CD4-positive, alpha-beta memory T cell (primary cell): ENCODE measurements at regions of chr7 and their contacts with region 1.

Region 1: GRCh38 chr7:142535123-142535779 is 214.0 kb upstream of the PRSS1 start:
- DNase-seq: peak; percentile 57 to 80 (median 64)
- H3K4me3 ChIP-seq: peak overlapping the region in 1 of 2 donors; percentile 38
- H3K4me3 Mint-ChIP-seq: peak overlapping the region; percentile 61 to 86 (median 76)
- H3K27ac ChIP-seq: peak overlapping the region; percentile 49
- H3K27ac Mint-ChIP-seq: peak overlapping the region; percentile 32 to 94 (median 87)
- H3K4me1 ChIP-seq: peaks cover 28% of the 10 kb centered on the region
- H3K4me1 Mint-ChIP-seq: peaks cover 17 to 40% (median 23%) of the 10 kb centered on the region in 4 donors
- H3K27me3 ChIP-seq: no peaks in the 10 kb centered on the region
- H3K27me3 Mint-ChIP-seq: peaks cover 0 to 2% of the 10 kb centered on the region in 2 donors

Region 2: DNA sequence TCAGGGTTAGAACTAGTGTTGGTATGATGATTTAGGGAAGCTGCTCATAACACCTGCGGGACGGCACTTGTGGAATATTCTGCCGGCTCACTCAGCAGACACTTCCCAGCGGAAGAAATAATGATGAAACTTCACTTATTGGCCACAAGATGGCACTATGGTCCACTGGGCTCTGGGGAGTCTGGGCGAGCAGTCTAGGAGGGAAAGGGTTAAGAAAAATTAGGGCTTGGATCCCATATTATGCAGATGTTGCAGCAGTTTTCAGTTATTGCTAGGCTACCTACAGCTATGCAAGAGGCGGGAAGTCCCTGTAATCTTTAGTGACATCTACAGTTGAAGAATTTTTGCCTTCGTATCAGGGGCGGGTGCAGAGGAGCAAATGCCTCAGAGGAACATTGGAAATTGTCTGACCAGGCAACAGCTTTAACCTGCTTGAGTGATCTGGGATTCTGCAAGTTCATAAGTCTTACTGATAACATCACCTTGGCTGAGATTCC is 38.7 kb before region 1 on chr7:
- CTCF ChIA-PET with region 1: interaction called, 14 read pairs
- POLR2A ChIA-PET with region 1: no interaction called
- intact Hi-C with region 1: loop called (anchors 1 kb)
- DNase-seq: peak; percentile 33 to 46 (median 36)
- H3K4me3 ChIP-seq: no peak overlapping the region
- H3K4me3 Mint-ChIP-seq: peak overlapping the region; percentile 40 to 75 (median 66)
- H3K27ac ChIP-seq: no peak overlapping the region
- H3K27ac Mint-ChIP-seq: peak overlapping the region; percentile 39 to 86 (median 74)
- H3K4me1 ChIP-seq: peaks cover 30% of the 10 kb centered on the region
- H3K4me1 Mint-ChIP-seq: peaks cover 24 to 51% (median 30%) of the 10 kb centered on the region in 4 donors
- H3K27me3 ChIP-seq: no peaks in the 10 kb centered on the region
- H3K27me3 Mint-ChIP-seq: no peaks in the 10 kb centered on the region

Region 3: DNA sequence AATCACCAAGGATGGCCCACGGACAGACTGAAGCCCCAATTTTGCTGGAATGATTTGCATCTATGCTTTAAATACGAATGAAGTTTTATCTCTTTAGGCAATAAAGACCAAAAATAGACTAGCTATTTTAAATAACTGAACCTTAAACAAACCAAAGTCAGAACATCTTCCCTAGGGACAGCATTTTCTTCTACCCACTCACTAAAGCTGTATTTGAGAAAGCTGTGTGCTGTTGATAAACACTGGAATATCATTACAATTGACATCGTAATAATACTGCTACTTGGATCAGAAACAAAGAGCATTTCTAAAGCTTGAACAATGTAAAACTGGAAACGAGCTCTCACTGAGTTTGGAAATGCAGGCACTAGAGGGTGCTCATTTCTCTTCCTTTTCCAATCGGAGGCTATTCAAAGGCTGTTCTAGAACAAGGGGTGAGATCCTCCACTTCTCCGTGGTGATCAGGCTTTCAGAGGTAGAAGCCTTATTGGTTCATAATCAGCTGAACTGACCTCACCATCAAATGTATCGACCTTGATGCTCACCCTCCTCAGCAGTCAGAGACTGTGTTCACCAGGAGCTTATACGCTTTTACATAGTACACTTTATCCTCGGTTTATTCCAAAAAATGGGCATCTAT is 11.3 kb before region 1 on chr7:
- CTCF ChIA-PET with region 1: interaction called, 20 read pairs
- POLR2A ChIA-PET with region 1: interaction called, 3 read pairs
- intact Hi-C with region 1: no loop called
- DNase-seq: no peak
- H3K4me3 ChIP-seq: no peak overlapping the region
- H3K4me3 Mint-ChIP-seq: no peak overlapping the region
- H3K27ac ChIP-seq: no peak overlapping the region
- H3K27ac Mint-ChIP-seq: peak overlapping the region in 1 of 7 donors; percentile 20
- H3K4me1 ChIP-seq: peaks cover 12% of the 10 kb centered on the region
- H3K4me1 Mint-ChIP-seq: peaks cover 5 to 16% (median 9%) of the 10 kb centered on the region in 4 donors
- H3K27me3 ChIP-seq: no peaks in the 10 kb centered on the region
- H3K27me3 Mint-ChIP-seq: no peaks in the 10 kb centered on the region

Region 4: GRCh38 chr7:142557971-142558582 is 22.8 kb after region 1 on chr7:
- CTCF ChIA-PET with region 1: interaction called, 22 read pairs
- POLR2A ChIA-PET with region 1: interaction called, 17 read pairs
- intact Hi-C with region 1: loop called (anchors 1 kb)
- DNase-seq: peak; percentile 31 to 47 (median 41)
- H3K4me3 ChIP-seq: no peak overlapping the region
- H3K4me3 Mint-ChIP-seq: peak overlapping the region in 7 of 8 donors; percentile 17 to 77 (median 66)
- H3K27ac ChIP-seq: no peak overlapping the region
- H3K27ac Mint-ChIP-seq: peak overlapping the region in 4 of 7 donors; percentile 3 to 72 (median 37)
- H3K4me1 ChIP-seq: no peaks in the 10 kb centered on the region
- H3K4me1 Mint-ChIP-seq: peaks cover 0 to 4% (median 2%) of the 10 kb centered on the region in 4 donors
- H3K27me3 ChIP-seq: no peaks in the 10 kb centered on the region
- H3K27me3 Mint-ChIP-seq: peaks cover 2 to 3% of the 10 kb centered on the region in 2 donors

Region 5: DNA sequence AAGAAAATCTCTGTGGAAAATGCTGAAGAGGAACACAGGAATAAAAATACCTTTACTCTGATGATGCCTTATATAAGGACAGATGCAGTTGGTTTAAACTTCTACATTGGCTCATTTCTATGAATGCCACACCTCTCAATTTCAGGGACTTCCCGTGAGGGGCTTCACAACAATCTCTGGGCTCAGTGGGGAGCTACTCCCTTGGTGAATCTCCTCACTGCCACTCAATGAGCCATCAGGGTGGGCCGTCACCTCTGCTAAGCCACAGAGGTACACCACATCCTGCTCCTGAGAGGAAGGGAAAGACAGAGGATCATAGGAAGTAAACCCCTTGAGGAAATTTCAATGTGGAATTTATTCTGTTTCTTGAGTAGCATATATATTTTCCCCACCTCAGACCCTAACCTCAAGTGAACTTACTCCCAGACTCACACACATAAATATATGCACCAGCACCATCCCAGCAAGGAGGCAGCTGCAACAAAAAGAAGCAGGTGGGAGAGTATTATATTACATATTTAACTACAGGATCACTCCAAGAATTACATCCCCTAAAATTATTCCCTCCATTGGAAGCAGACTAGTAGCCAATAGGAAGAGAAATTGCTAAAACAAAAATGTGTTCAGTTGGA is 150.7 kb after region 1 on chr7:
- CTCF ChIA-PET with region 1: no interaction called
- POLR2A ChIA-PET with region 1: no interaction called
- intact Hi-C with region 1: no loop called
- DNase-seq: no peak
- H3K4me3 ChIP-seq: no peak overlapping the region
- H3K4me3 Mint-ChIP-seq: peak overlapping the region in 4 of 8 donors; percentile 18 to 31 (median 21)
- H3K27ac ChIP-seq: no peak overlapping the region
- H3K27ac Mint-ChIP-seq: peak overlapping the region; percentile 18 to 82 (median 75)
- H3K4me1 ChIP-seq: peaks cover 18% of the 10 kb centered on the region
- H3K4me1 Mint-ChIP-seq: peaks cover 22 to 52% (median 36%) of the 10 kb centered on the region in 4 donors
- H3K27me3 ChIP-seq: no peaks in the 10 kb centered on the region
- H3K27me3 Mint-ChIP-seq: no peaks in the 10 kb centered on the region